A673 (cell line): ENCODE measurements at regions of chr13 and their contacts with region 1.

Region 1: GRCh38 chr13:57629821-57630235 is 1.7 kb upstream of the PCDH17 start:
- DNase-seq: peak; percentile 99
- H3K4me3 ChIP-seq: peak overlapping the region; percentile 68
- H3K27ac ChIP-seq: peak overlapping the region; percentile 62
- H3K4me1 ChIP-seq: peaks cover 20% of the 10 kb centered on the region
- H3K27me3 ChIP-seq: no peaks in the 10 kb centered on the region
- CTCF ChIP-seq: no peak

Region 2: DNA sequence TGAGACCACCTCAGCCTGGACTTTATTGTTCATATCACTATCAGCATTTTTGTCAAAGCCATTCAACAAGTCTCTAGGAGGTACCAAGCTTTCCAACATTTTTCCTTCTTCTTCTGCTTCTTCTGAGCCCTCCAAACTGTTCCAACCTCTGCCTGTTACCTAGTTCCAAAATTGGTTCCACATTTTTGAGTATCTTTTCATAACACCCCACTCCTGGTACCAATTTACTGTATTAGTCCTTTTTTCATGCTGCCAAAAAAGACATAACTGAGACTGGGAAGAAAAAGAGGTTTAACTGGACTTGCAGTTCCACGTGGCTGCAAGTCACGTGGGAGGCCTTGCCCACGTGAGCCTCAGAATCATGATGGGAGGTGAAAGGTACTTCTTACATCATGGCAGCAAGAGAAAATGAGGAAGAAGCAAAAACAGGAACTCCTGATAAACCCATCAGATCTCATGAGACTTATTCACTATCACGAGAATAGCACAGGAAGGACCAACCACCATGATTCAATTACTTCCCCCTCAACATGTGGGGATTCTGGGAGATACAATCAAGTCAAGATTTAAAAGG is 216.9 kb after region 1 on chr13:
- CTCF ChIA-PET with region 1: no interaction called
- POLR2A ChIA-PET with region 1: no interaction called
- intact Hi-C with region 1: no loop called
- DNase-seq: no peak
- H3K4me3 ChIP-seq: no peak overlapping the region
- H3K27ac ChIP-seq: no peak overlapping the region
- H3K4me1 ChIP-seq: no peaks in the 10 kb centered on the region
- H3K27me3 ChIP-seq: no peaks in the 10 kb centered on the region
- CTCF ChIP-seq: no peak

Region 3: DNA sequence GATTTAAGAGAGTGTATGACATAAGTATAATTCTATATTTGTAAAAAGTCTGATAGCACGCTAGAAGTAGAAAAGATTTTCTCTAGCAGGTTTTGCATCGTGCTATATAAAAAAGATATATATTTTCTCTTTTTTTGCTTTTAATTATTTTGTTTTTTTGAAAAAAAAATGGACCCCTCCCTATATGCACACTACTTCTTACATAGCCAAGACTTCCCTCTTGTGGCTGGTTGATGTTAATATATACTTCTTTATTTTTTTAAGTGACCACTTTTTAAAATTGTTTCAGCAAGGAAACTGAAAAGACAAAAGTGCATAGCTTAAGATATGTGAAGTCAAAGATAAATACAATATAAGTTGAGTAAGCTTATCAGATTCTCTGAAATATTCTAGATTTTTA is 1331.1 kb after region 1 on chr13:
- CTCF ChIA-PET with region 1: no interaction called
- POLR2A ChIA-PET with region 1: no interaction called
- intact Hi-C with region 1: loop called (anchors 10 kb)
- DNase-seq: peak; percentile 30
- H3K4me3 ChIP-seq: no peak overlapping the region
- H3K27ac ChIP-seq: no peak overlapping the region
- H3K4me1 ChIP-seq: no peaks in the 10 kb centered on the region
- H3K27me3 ChIP-seq: no peaks in the 10 kb centered on the region
- CTCF ChIP-seq: peak; percentile 55; the same call in 1 of the 2 replicates

Region 4: GRCh38 chr13:59261928-59262488 is 1632.2 kb after region 1 on chr13:
- CTCF ChIA-PET with region 1: no interaction called
- POLR2A ChIA-PET with region 1: no interaction called
- intact Hi-C with region 1: loop called (anchors 2 kb)
- DNase-seq: peak; percentile 58
- H3K4me3 ChIP-seq: no peak overlapping the region
- H3K27ac ChIP-seq: no peak overlapping the region
- H3K4me1 ChIP-seq: peaks cover 10% of the 10 kb centered on the region
- H3K27me3 ChIP-seq: no peaks in the 10 kb centered on the region
- CTCF ChIP-seq: peak; percentile 72

Region 5: GRCh38 chr13:59318320-59318930 is 1688.6 kb after region 1 on chr13:
- CTCF ChIA-PET with region 1: interaction called, 3 read pairs
- POLR2A ChIA-PET with region 1: no interaction called
- intact Hi-C with region 1: loop called (anchors 2 kb)
- DNase-seq: peak; percentile 93
- H3K4me3 ChIP-seq: no peak overlapping the region
- H3K27ac ChIP-seq: peak overlapping the region; percentile 24
- H3K4me1 ChIP-seq: peaks cover 32% of the 10 kb centered on the region
- H3K27me3 ChIP-seq: no peaks in the 10 kb centered on the region
- CTCF ChIP-seq: peak; percentile 88

Region 6: DNA sequence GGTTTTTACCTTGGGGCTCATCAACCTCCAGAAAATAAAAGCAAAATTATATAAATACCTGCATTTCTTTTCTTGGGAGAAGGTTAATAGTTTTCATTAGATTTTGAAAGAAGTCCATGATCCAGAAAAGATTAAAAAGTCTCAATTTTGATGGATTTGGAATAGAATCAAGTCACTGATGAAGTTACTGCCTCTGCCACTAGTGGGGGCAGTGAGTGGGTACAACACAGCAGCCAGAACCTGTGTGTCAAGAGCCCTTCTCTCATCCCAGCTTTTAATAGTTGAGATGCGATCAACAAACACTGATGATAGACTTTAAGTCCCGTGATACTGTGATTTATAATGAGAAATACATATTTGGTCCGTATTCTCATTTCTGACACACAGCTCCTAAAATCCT is 1847.2 kb after region 1 on chr13:
- CTCF ChIA-PET with region 1: no interaction called
- POLR2A ChIA-PET with region 1: no interaction called
- intact Hi-C with region 1: loop called (anchors 10 kb)
- DNase-seq: no peak
- H3K4me3 ChIP-seq: no peak overlapping the region
- H3K27ac ChIP-seq: no peak overlapping the region
- H3K4me1 ChIP-seq: peaks cover 55% of the 10 kb centered on the region
- H3K27me3 ChIP-seq: no peaks in the 10 kb centered on the region
- CTCF ChIP-seq: peak; percentile 56